Heart right ventricle (tissue), 16 donors: ENCODE measurements at regions of chr20 and their contacts with region 1.

Region 1: GRCh38 chr20:11195899-11196558 is 522.2 kb upstream of the JAG1 start:
- DNase-seq: peak in 1 of 2 donors; percentile 23
- ATAC-seq: peak; percentile 54 to 88 (median 78)
- H3K4me3 ChIP-seq: no peak overlapping the region
- H3K27ac ChIP-seq: peak overlapping the region in 9 of 10 donors; percentile 37 to 76 (median 64)
- H3K4me1 ChIP-seq: peaks cover 0 to 25% (median 13%) of the 10 kb centered on the region in 9 donors
- H3K27me3 ChIP-seq: no peaks in the 10 kb centered on the region
- CTCF ChIP-seq: no peak

Region 2: GRCh38 chr20:11108102-11108810 is 87.8 kb before region 1 on chr20:
- intact Hi-C with region 1: loop called in 1 of 10 experiments (anchors 5 kb)
- DNase-seq: peak; percentile 15 to 64
- ATAC-seq: peak; percentile 88 to 99 (median 98)
- H3K4me3 ChIP-seq: no peak overlapping the region
- H3K27ac ChIP-seq: peak overlapping the region in 6 of 10 donors; percentile 26 to 67 (median 60)
- H3K4me1 ChIP-seq: peaks cover 0 to 25% (median 11%) of the 10 kb centered on the region in 9 donors
- H3K27me3 ChIP-seq: no peaks in the 10 kb centered on the region
- CTCF ChIP-seq: no peak

Region 3: GRCh38 chr20:11166712-11167111 is 29.3 kb before region 1 on chr20:
- intact Hi-C with region 1: loop called in 1 of 10 experiments (anchors 1 kb)
- DNase-seq: no peak
- ATAC-seq: no peak
- H3K4me3 ChIP-seq: no peak overlapping the region
- H3K27ac ChIP-seq: no peak overlapping the region
- H3K4me1 ChIP-seq: peaks cover 0 to 24% (median 12%) of the 10 kb centered on the region in 9 donors
- H3K27me3 ChIP-seq: no peaks in the 10 kb centered on the region
- CTCF ChIP-seq: no peak

Region 4: DNA sequence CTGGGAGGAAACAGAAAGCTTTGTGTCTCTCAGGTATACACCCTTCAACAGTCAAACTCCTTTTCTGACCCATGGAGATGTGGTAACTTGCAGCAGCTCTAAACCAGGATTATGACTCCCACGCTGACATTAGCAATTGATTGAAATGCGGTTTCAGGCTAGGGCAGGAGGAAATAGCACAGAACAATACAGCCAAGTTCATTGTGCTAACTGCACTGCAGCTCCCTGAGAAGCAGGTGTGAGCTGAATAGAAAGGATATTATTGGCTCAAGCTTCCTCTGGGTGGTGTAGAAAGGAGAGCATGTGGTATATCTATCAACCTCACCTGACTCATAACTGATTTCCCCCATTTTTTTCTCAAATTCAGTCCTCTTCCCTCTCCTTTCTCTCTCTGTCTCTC is 109.4 kb after region 1 on chr20:
- intact Hi-C with region 1: no loop called
- DNase-seq: no peak
- ATAC-seq: peak in 6 of 8 donors; percentile 41 to 76 (median 53)
- H3K4me3 ChIP-seq: no peak overlapping the region
- H3K27ac ChIP-seq: peak overlapping the region in 1 of 10 donors; percentile 20
- H3K4me1 ChIP-seq: peaks cover 0 to 4% (median 0%) of the 10 kb centered on the region in 9 donors
- H3K27me3 ChIP-seq: no peaks in the 10 kb centered on the region
- CTCF ChIP-seq: no peak